Colonic mucosa (tissue), 4 donors: ENCODE measurements at regions of chr1 and their contacts with region 1.

Region 1: GRCh38 chr1:211323156-211324063 is 3.2 kb upstream of the TRAF5 start:
- DNase-seq: peak; percentile 74
- H3K4me3 ChIP-seq: no peak overlapping the region
- H3K27ac ChIP-seq: no peak overlapping the region
- H3K4me1 ChIP-seq: no peaks in the 10 kb centered on the region
- H3K27me3 ChIP-seq: no peaks in the 10 kb centered on the region
- CTCF ChIP-seq: peak; percentile 71

Region 2: DNA sequence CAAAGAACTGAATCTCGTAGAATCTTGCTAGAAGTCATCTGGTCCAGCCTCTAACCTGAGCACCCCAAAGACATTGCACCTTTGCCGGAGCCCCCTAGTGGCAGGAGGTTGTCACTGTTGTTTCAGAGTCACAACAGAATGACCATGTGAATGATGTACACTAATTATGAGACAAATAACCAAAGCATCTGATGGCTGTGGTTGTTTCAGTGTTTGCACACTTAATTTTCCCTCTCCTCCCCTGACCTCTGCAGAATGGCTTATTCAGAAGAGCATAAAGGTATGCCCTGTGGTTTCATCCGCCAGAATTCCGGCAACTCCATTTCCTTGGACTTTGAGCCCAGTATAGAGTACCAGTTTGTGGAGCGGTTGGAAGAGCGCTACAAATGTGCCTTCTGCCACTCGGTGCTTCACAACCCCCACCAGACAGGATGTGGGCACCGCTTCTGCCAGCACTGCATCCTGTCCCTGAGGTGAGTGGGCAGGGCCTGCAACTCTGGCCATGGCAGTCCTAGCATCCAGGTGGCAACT is 29.6 kb after region 1 on chr1:
- intact Hi-C with region 1: loop called (anchors 1 kb)
- DNase-seq: peak; percentile 78
- H3K4me3 ChIP-seq: no peak overlapping the region
- H3K27ac ChIP-seq: no peak overlapping the region
- H3K4me1 ChIP-seq: no peaks in the 10 kb centered on the region
- H3K27me3 ChIP-seq: no peaks in the 10 kb centered on the region
- CTCF ChIP-seq: peak; percentile 81

Region 3: DNA sequence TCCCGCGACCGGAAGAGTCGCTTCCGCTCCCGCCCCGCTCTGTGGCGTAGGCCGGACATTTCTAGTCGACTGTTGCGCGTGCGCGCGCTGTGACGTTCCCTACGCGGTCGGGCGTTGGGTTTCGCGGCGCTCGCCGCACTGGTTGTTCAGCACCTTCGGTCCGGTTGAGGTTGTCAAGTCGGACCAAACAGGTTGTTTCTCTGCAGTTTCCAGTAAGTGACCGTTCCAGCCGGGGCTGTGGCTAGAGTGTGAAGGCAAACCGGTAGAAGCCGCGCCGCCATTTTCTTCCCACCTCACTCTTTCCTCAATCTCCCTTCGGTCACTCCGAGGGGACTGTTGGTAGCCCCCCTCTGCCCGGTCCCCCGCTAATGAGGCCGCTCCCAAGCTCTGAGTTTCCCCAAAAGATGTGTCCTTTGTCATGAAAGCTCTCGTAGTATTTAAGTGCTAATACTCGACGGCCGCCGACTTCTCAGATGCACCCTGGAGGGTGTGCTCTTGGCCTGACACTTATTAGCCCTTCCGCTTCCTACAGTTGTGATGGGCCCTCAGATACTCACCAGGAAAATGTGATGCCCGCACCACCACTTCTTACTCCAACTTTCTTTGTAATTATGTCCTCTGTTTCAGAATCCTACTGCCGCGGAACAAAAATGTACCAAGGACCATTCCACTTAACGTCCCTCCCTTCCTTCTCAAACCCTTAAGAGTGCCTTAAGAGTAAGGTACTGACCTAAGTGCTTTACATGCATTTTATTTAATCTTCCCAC is 59.5 kb after region 1 on chr1:
- intact Hi-C with region 1: no loop called
- DNase-seq: peak; percentile 97
- H3K4me3 ChIP-seq: peak overlapping the region; percentile 60
- H3K27ac ChIP-seq: peak overlapping the region; percentile 98
- H3K4me1 ChIP-seq: no peaks in the 10 kb centered on the region
- H3K27me3 ChIP-seq: no peaks in the 10 kb centered on the region
- CTCF ChIP-seq: no peak

Region 4: GRCh38 chr1:211476200-211476849 is 152.9 kb after region 1 on chr1:
- intact Hi-C with region 1: loop called (anchors 5 kb)
- DNase-seq: peak; percentile 84
- H3K4me3 ChIP-seq: no peak overlapping the region
- H3K27ac ChIP-seq: no peak overlapping the region
- H3K4me1 ChIP-seq: no peaks in the 10 kb centered on the region
- H3K27me3 ChIP-seq: no peaks in the 10 kb centered on the region
- CTCF ChIP-seq: peak; percentile 72

Region 5: GRCh38 chr1:211514030-211514754 is 190.8 kb after region 1 on chr1:
- intact Hi-C with region 1: loop called (anchors 5 kb)
- DNase-seq: peak; percentile 90
- H3K4me3 ChIP-seq: no peak overlapping the region
- H3K27ac ChIP-seq: peak overlapping the region; percentile 90
- H3K4me1 ChIP-seq: peaks cover 9% of the 10 kb centered on the region
- H3K27me3 ChIP-seq: no peaks in the 10 kb centered on the region
- CTCF ChIP-seq: peak; percentile 76

Region 6: DNA sequence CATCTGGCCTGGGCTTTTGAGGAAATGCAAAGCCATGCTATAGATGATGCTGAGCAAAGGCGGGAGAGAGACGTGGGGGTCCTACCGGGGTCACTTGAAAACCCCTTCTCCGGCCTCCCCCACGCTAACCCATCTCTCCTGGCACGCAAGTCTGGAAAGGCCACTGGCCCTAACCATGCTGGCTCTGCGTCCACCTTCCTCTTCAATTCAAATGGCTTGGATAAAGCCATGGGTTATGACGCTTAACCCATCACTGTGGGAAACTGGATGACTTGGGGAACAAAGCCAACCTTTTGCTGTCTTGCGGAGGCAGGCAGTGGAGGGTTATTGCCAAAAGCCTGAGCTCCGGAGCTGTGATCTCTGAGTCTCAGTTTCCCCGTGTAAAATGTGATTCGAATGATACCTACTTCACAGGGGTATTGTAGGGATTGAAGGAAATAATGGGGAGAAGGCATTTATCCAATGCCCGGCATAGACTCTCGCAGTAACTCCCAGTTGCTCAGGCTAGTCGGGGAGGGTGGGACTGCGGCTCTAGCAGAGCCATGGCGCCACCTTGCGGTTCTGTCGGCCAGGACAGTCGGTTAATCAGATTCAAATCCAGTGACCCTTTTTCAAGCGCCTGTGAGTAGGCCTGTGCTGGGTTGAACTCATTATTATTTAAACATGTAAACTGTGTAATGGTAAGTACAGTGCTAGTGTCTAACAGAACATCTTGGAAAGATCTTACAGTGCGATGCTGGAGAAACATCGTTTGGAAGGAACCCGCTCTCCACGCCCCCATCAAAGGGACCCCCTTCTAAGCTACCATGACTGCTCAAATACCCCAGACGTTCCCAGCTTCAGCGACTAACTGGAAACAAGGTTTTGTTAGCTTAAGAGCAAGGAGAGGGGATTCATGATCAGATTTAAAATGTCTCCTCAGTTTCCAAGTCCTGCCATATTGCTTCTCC is 331.7 kb after region 1 on chr1:
- intact Hi-C with region 1: loop called (anchors 10 kb)
- DNase-seq: peak; percentile 89
- H3K4me3 ChIP-seq: no peak overlapping the region
- H3K27ac ChIP-seq: no peak overlapping the region
- H3K4me1 ChIP-seq: no peaks in the 10 kb centered on the region
- H3K27me3 ChIP-seq: no peaks in the 10 kb centered on the region
- CTCF ChIP-seq: peak; percentile 84